PC-9 (cell line): ENCODE measurements at regions of chr11 and their contacts with region 1.

Region 1: DNA sequence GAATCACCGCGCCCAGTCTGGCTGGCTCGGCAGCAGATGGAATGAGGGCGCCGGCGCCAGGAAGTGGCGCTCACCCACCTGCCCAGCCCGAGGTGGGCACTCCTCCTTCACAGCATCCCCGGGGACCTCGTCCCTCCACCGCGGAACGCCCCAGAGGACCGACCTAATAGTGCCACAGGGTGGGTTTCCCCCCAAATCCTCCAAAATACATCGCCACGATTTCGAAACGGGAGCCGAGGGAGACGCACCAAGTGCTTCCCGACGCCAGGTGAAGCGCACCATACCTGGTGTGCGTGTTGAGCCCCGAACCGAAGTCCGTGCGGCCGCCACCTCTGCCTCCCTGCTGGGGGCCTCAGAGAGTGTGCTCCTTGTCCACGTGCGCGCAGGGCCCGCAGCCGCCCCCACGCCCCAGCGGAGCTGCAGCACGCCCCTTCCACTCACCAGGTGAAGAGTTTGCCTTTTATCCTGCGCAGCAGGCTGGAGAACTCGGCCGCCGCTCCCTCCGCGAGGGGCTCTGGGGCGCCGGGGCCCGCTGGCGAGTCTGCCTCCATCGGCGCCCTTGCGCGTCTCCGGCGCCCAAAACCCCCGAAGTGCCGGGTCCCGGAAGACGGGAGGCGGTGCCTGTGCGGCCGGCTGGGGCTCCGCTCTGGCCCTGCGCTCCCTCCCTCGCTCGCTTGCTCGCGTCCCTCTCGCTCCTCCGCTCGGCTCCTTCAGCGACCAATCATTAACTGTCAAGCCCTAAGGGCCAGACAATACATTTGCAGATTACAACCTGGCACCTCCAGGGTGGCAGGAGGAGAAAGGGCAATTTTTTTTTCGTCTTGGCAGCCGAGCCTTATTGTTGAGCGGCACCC is at the start of gene SLC35F2:
- DNase-seq: peak; percentile 81 to 91
- H3K4me3 ChIP-seq: peak within 1 kb of the TSS; percentile 93
- H3K27ac ChIP-seq: peak within 1 kb of the TSS; percentile 78
- H3K4me1 ChIP-seq: peaks cover 31% of the 10 kb centered on the region
- H3K27me3 ChIP-seq: no peaks in the 10 kb centered on the region
- CTCF ChIP-seq: 0 out of 2 replicates have a peak, but pooled peaks have one; percentile 13
- total RNA-seq, gene SLC35F2: 24.9 and 35.7 TPM in 2 replicates

Region 2: GRCh38 chr11:107549253-107549953 is 309.0 kb before region 1 on chr11:
- CTCF ChIA-PET with region 1: no interaction called
- POLR2A ChIA-PET with region 1: interaction called, 39 read pairs
- intact Hi-C with region 1: no loop called
- DNase-seq: no peak
- H3K4me3 ChIP-seq: no peak overlapping the region
- H3K27ac ChIP-seq: no peak overlapping the region
- H3K4me1 ChIP-seq: peaks cover 10% of the 10 kb centered on the region
- H3K27me3 ChIP-seq: no peaks in the 10 kb centered on the region
- CTCF ChIP-seq: peak; percentile 92

Region 3: GRCh38 chr11:107787748-107788147 is 70.7 kb before region 1 on chr11:
- CTCF ChIA-PET with region 1: no interaction called
- POLR2A ChIA-PET with region 1: no interaction called
- intact Hi-C with region 1: loop called (anchors 2 kb)
- DNase-seq: peak in 1 of 2 experiments; percentile 13
- H3K4me3 ChIP-seq: no peak overlapping the region
- H3K27ac ChIP-seq: peak overlapping the region; percentile 61
- H3K4me1 ChIP-seq: peaks cover 31% of the 10 kb centered on the region
- H3K27me3 ChIP-seq: no peaks in the 10 kb centered on the region
- CTCF ChIP-seq: no peak

Region 4: DNA sequence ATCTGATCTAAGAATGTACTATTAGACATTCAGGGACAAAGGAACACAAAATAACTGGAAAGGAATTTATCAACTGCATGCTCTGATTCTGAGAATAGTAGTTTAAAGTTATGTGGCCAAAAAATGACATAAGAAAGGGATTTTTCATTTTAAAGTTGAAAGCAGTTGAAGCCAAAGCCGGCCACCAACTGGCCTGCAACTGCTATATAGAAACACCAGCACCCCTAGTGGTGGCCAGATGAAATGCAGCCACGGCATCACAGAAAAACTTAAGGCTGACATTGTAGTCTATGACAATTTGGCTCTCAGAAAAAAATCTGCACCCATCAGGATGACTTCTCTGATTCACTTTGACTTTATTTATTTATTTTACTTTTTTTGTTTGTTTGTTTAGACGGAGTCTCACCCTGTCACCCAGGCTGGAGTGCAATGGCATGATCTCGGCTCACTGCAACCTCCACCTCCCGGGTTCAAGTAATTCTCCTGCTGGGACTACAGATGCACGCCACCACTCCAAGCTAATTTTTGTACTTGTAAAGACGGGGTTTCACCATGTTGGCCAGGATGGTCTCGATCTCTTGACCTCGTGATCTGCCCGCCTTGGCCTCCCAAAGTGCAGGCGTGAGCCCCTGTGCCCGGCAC is 59.1 kb before region 1 on chr11:
- CTCF ChIA-PET with region 1: no interaction called
- POLR2A ChIA-PET with region 1: no interaction called
- intact Hi-C with region 1: loop called (anchors 2 kb)
- DNase-seq: peak; percentile 65 to 72
- H3K4me3 ChIP-seq: no peak overlapping the region
- H3K27ac ChIP-seq: no peak overlapping the region
- H3K4me1 ChIP-seq: no peaks in the 10 kb centered on the region
- H3K27me3 ChIP-seq: no peaks in the 10 kb centered on the region
- CTCF ChIP-seq: peak; percentile 99

Region 5: DNA sequence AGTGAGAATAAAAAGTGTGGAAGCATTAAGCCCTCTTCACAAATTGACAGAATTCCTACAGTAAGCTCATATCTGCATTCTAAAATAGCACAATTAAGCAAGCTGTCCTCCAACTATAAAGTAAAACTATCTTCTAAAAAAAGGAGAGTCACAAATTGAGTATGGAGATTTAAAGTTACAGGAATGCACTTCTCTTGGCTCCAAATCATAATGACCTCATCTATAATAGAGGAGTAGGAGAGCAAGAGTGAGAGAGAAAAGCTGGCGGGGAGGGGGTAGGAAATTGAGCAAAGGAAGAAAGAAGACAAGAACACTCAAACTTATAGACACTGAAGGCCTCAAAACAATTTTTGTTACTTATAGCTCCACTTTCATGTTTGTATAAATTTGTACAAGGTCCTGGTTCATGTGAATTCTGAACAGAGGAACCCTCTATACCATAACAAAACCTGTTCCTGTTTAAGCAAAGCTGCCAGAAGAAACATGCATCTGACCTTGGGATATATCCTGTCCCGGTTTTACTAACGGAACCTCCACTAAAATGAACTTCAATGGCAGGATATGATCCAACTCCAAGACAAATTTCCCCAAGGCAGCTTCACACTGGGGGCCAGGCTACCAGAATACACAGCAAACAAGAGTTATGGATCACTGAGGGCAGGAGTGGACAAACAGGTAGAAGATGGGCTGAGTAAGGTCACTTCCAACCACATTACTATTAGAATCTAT is 37.1 kb before region 1 on chr11:
- CTCF ChIA-PET with region 1: interaction called, 3 read pairs
- POLR2A ChIA-PET with region 1: no interaction called
- intact Hi-C with region 1: loop called (anchors 5 kb)
- DNase-seq: no peak
- H3K4me3 ChIP-seq: no peak overlapping the region
- H3K27ac ChIP-seq: no peak overlapping the region
- H3K4me1 ChIP-seq: peaks cover 10% of the 10 kb centered on the region; the same call in 1 of the 2 replicates
- H3K27me3 ChIP-seq: no peaks in the 10 kb centered on the region
- CTCF ChIP-seq: no peak

Region 6: DNA sequence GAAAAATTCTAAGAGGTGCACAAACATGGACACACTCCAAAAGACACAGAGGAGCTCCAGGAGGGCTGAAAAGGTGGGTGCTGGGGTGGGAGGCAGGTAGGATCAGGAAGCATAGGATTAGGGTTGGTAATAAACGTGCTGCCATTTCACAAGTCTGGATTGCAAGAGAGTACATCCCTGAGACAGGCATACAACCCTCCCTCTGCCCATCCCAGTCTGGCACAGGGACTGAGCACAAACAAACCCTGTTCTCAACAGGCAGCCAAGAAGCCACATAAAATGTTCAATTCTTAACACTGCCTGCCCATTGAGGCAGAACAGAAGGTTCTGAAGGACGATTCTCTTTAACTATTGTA is 18.3 kb before region 1 on chr11:
- CTCF ChIA-PET with region 1: no interaction called
- POLR2A ChIA-PET with region 1: no interaction called
- intact Hi-C with region 1: loop called (anchors 1 kb)
- DNase-seq: no peak
- H3K4me3 ChIP-seq: peak overlapping the region; percentile 28; the same call in 1 of the 2 replicates
- H3K27ac ChIP-seq: peak overlapping the region; percentile 93
- H3K4me1 ChIP-seq: peaks cover 75% of the 10 kb centered on the region
- H3K27me3 ChIP-seq: no peaks in the 10 kb centered on the region
- CTCF ChIP-seq: no peak